ENCODE measurements at regions of chr1 and their contacts with region 1.

Region 1: DNA sequence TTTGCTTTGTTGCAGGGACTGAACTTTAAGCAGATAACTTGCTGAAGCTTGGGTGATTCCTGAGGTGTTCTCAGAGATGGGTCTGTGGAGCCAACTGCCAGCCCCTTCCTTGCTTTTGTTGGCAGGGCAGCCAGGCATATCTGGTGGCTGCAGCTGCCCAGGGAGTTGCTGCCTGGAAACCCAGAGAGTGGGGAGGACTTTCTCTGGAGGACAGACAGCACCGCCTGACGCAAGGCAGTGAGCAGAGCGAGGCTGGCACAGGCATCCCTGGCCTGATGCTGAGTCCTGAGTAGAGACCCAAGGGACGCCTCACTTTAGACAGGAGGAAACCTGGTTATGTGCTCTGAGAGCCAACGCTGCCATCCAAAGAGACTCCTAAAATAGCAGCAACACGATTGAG is 9.8 kb upstream of the OLFML2B start:
- DNase-seq: peak; percentile 68 to 76
- H3K4me3 ChIP-seq: no peak overlapping the region
- H3K27ac ChIP-seq: no peak overlapping the region
- H3K4me1 ChIP-seq: peaks cover 0 to 6% of the 10 kb centered on the region in 2 donors
- H3K27me3 ChIP-seq: no peaks in the 10 kb centered on the region
- CTCF ChIP-seq: no peak
- POLR2A ChIP-seq: no peak

Region 2: GRCh38 chr1:161792740-161793139 is 240.7 kb before region 1 on chr1:
- intact Hi-C with region 1: loop called (anchors 5 kb)
- DNase-seq: no peak
- H3K4me3 ChIP-seq: no peak overlapping the region
- H3K27ac ChIP-seq: no peak overlapping the region
- H3K4me1 ChIP-seq: no peaks in the 10 kb centered on the region
- H3K27me3 ChIP-seq: no peaks in the 10 kb centered on the region
- CTCF ChIP-seq: peak in 4 of 6 experiments; percentile 34 to 77 (median 62)
- POLR2A ChIP-seq: no peak

Measured in thyroid gland (tissue), 4 donors.